ENCODE measurements at regions of chr12 and their contacts with region 1.

Region 1: GRCh38 chr12:108797677-108798076 is 59.7 kb downstream of the SSH1 start:
- DNase-seq: no peak
- H3K4me3 ChIP-seq: no peak overlapping the region
- H3K27ac ChIP-seq: no peak overlapping the region
- H3K4me1 ChIP-seq: peaks cover 18% of the 10 kb centered on the region
- CTCF ChIP-seq: no peak

Region 2: GRCh38 chr12:108597559-108598471 is 199.9 kb before region 1 on chr12 and contains the start of gene TMEM119:
- CTCF ChIA-PET with region 1: interaction called, 10 read pairs
- POLR2A ChIA-PET with region 1: no interaction called
- intact Hi-C with region 1: no loop called
- DNase-seq: peak; percentile 21
- H3K4me3 ChIP-seq: no peak within 1 kb of the TSS
- H3K27ac ChIP-seq: no peak within 1 kb of the TSS
- H3K4me1 ChIP-seq: no peaks in the 10 kb centered on the region
- CTCF ChIP-seq: no peak
- total RNA-seq, gene TMEM119: not detected in 2 replicates